Endothelial cell of umbilical vein (primary cell): ENCODE measurements at regions of chr10 and their contacts with region 1.

Region 1: GRCh38 chr10:79242620-79243152 is 104.6 kb upstream of the PPIF start:
- DNase-seq: peak; percentile 71
- H3K4me3 ChIP-seq: peak overlapping the region; percentile 29 to 44 (median 44)
- H3K27ac ChIP-seq: peak overlapping the region; percentile 49
- H3K4me1 ChIP-seq: peaks cover 62% of the 10 kb centered on the region
- H3K27me3 ChIP-seq: no peaks in the 10 kb centered on the region
- CTCF ChIP-seq: no peak
- POLR2A ChIP-seq: no peak

Region 2: GRCh38 chr10:79007421-79008319 is 235.0 kb before region 1 on chr10:
- CTCF ChIA-PET with region 1: no interaction called
- POLR2A ChIA-PET with region 1: no interaction called
- dilution Hi-C with region 1: no loop called
- intact Hi-C with region 1: no loop called
- DNase-seq: no peak
- H3K4me3 ChIP-seq: no peak overlapping the region
- H3K27ac ChIP-seq: no peak overlapping the region
- H3K4me1 ChIP-seq: no peaks in the 10 kb centered on the region
- H3K27me3 ChIP-seq: peaks cover 0 to 7% of the 10 kb centered on the region in 2 experiments
- CTCF ChIP-seq: no peak
- POLR2A ChIP-seq: no peak

Region 3: DNA sequence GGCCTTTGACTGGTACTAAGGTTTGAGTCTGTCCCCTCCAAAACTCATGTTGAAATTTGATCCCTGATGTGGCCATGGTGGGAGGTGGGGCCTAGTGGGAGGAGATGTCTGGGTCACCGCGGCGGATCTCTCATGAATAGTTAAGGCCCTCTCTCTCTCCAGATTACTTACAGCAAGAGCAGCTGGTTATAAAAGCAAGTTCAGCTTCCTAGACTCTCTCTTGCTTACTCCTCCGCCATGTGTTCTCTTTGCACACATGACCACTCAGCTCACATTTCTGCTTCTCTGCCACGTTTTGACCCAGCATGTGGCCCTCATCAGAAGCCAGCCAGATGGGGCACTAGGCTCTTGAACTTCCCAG is 203.9 kb before region 1 on chr10:
- CTCF ChIA-PET with region 1: no interaction called
- POLR2A ChIA-PET with region 1: no interaction called
- dilution Hi-C with region 1: no loop called
- intact Hi-C with region 1: no loop called
- DNase-seq: no peak
- H3K4me3 ChIP-seq: no peak overlapping the region
- H3K27ac ChIP-seq: no peak overlapping the region
- H3K4me1 ChIP-seq: no peaks in the 10 kb centered on the region
- H3K27me3 ChIP-seq: peaks cover 21 to 32% of the 10 kb centered on the region in 2 experiments
- CTCF ChIP-seq: no peak
- POLR2A ChIP-seq: no peak

Region 4: GRCh38 chr10:79155301-79156081 is 87.2 kb before region 1 on chr10:
- CTCF ChIA-PET with region 1: no interaction called
- POLR2A ChIA-PET with region 1: no interaction called
- dilution Hi-C with region 1: no loop called
- intact Hi-C with region 1: loop called (anchors 5 kb)
- DNase-seq: peak; percentile 66
- H3K4me3 ChIP-seq: no peak overlapping the region
- H3K27ac ChIP-seq: peak overlapping the region; percentile 77
- H3K4me1 ChIP-seq: peaks cover 76% of the 10 kb centered on the region
- H3K27me3 ChIP-seq: no peaks in the 10 kb centered on the region
- CTCF ChIP-seq: peak in 1 of 2 donors; percentile 34
- POLR2A ChIP-seq: no peak

Region 5: GRCh38 chr10:79266543-79267312 is 24.0 kb after region 1 on chr10:
- CTCF ChIA-PET with region 1: interaction called, 3 read pairs
- POLR2A ChIA-PET with region 1: interaction called, 3 read pairs
- dilution Hi-C with region 1: no loop called
- intact Hi-C with region 1: loop called (anchors 1 kb)
- DNase-seq: peak; percentile 92
- H3K4me3 ChIP-seq: no peak overlapping the region
- H3K27ac ChIP-seq: peak overlapping the region; percentile 86
- H3K4me1 ChIP-seq: peaks cover 37% of the 10 kb centered on the region
- H3K27me3 ChIP-seq: no peaks in the 10 kb centered on the region
- CTCF ChIP-seq: no peak
- POLR2A ChIP-seq: no peak

Region 6: GRCh38 chr10:79292891-79293746 is 50.4 kb after region 1 on chr10:
- CTCF ChIA-PET with region 1: interaction called, 10 read pairs
- POLR2A ChIA-PET with region 1: no interaction called
- dilution Hi-C with region 1: no loop called
- intact Hi-C with region 1: no loop called
- DNase-seq: no peak
- H3K4me3 ChIP-seq: no peak overlapping the region
- H3K27ac ChIP-seq: peak overlapping the region; percentile 64
- H3K4me1 ChIP-seq: peaks cover 10% of the 10 kb centered on the region
- H3K27me3 ChIP-seq: no peaks in the 10 kb centered on the region
- CTCF ChIP-seq: peak; percentile 6 to 65
- POLR2A ChIP-seq: no peak